GM23248 (cell line): ENCODE measurements at regions of chr3 and their contacts with region 1.

Region 1: DNA sequence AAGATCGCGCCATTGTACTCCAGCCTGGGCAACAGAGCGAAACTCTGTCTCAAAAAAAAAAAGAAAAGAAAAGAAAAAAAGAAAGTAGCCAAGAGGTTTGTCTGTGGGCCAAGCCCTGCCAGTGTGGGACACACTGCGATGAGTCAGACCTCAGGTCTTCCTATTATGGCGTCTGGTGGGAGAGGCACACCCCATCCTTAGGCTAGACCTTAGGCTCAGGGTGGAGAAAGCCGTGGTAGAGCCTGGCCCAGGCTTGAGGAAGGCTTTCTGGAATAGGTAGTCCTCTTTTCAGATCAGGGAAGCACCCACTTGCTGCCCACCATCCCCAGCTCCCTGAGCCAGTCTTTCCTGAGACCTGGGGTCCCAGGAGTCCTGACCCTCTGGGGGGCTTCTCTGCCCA is 6.0 kb downstream of the HEMK1 start:
- DNase-seq: peak; percentile 65
- H3K4me3 ChIP-seq: no peak overlapping the region
- H3K27ac ChIP-seq: no peak overlapping the region
- H3K4me1 ChIP-seq: peaks cover 7% of the 10 kb centered on the region; the same call in 1 of the 2 replicates
- H3K27me3 ChIP-seq: no peaks in the 10 kb centered on the region

Region 2: GRCh38 chr3:50260027-50260941 is 315.1 kb before region 1 on chr3:
- in situ Hi-C with region 1: no loop called
- DNase-seq: peak; percentile 95
- H3K4me3 ChIP-seq: peak overlapping the region; percentile 67
- H3K27ac ChIP-seq: peak overlapping the region; percentile 64
- H3K4me1 ChIP-seq: peaks cover 18% of the 10 kb centered on the region
- H3K27me3 ChIP-seq: no peaks in the 10 kb centered on the region

Region 3: GRCh38 chr3:50474717-50475116 is 100.7 kb before region 1 on chr3:
- in situ Hi-C with region 1: no loop called
- DNase-seq: peak; percentile 82
- H3K4me3 ChIP-seq: no peak overlapping the region
- H3K27ac ChIP-seq: no peak overlapping the region
- H3K4me1 ChIP-seq: peaks cover 9% of the 10 kb centered on the region; the same call in 1 of the 2 replicates
- H3K27me3 ChIP-seq: no peaks in the 10 kb centered on the region

Region 4: DNA sequence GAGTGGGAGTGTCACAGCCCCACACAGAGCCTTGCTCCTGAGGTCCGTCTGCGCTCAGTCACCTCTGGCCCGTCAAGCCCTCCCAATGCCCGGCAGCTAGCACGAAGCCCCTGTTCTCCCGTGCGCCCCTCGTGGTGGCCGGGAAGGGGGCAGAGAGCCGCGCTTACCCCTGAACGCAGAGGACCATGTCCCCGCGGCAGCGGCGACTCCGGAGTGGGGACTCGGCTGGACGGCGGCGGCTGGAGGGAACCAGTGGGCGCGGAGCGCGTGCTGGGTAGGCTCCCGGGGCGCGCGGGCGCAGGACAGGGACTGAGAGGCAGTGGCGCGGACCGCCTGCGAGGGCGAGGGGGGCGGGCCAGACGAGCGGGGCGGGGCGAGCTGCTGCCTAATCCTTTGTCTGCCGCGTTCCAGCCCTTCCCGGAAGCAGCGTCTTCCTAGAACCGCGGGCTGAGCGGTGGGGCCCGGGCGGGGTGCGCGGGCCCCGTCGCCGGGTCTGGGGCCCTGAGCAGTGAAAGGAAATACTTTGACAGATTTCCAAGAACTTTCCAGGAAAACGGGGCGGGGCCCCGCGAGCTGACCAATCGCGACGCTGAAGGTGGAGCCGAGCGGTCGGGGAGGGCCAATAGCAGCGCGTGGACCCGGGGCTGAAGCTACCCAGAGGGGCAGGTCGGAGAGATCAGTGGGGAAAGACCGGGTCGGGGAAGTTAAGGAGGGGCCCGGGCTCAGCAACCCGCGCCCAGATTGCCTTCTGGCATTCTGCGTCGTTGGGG is 36.3 kb after region 1 on chr3 and contains the start of gene CISH:
- in situ Hi-C with region 1: loop called (anchors 5 kb)
- DNase-seq: peak; percentile 94
- H3K4me3 ChIP-seq: peak within 1 kb of the TSS; percentile 76
- H3K27ac ChIP-seq: no peak within 1 kb of the TSS
- H3K4me1 ChIP-seq: no peaks in the 10 kb centered on the region
- H3K27me3 ChIP-seq: no peaks in the 10 kb centered on the region
- total RNA-seq, gene CISH: 1.0 and 1.1 TPM in 2 replicates